Endothelial cell of umbilical vein (primary cell): ENCODE measurements at regions of chr15 and their contacts with region 1.

Region 1: DNA sequence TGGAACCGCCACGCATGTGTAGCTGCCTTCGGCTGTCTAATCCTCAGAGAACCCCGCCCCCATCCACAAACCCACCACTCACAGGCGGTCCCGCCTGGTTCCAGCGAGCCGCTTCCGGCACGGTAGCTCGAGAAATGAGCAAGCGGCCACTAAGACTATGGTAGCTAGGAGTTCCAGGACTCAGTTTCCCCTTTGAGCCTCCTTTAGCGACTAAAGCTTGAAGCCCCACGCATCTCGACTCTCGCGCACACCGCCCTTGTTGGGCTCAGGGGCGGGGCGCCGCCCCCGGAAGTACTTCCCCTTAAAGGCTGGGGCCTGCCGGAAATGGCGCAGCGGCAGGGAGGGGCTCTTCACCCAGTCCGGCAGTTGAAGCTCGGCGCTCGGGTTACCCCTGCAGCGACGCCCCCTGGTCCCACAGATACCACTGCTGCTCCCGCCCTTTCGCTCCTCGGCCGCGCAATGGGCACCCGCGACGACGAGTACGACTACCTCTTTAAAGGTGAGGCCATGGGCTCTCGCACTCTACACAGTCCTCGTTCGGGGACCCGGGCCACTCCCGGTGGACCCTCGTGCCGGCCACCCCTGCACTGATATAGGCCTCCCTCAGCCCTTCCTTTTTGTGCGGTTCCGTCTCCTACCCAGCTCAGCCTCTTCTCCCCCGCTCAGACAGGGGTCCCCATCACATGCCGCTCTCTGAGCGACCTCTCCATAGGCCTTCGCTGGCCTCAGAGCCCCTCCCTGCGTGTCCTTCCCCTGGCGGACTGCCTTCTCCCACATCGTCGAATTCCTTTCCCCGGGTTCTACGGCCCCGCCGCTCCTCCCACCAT is at the start of gene RAB11A:
- DNase-seq: peak; percentile 96
- H3K4me3 ChIP-seq: peak within 1 kb of the TSS; percentile 47 to 91 (median 81)
- H3K27ac ChIP-seq: peak within 1 kb of the TSS; percentile 61
- H3K4me1 ChIP-seq: peaks cover 22% of the 10 kb centered on the region
- H3K27me3 ChIP-seq: no peaks in the 10 kb centered on the region
- CTCF ChIP-seq: peak; percentile 19 to 41
- POLR2A ChIP-seq: peak; percentile 98
- total RNA-seq, gene RAB11A: 250 and 257 TPM in 2 replicates

Region 2: GRCh38 chr15:65516997-65517865 is 352.1 kb before region 1 on chr15 and contains the start of gene DPP8:
- CTCF ChIA-PET with region 1: no interaction called
- POLR2A ChIA-PET with region 1: no interaction called
- dilution Hi-C with region 1: no loop called
- intact Hi-C with region 1: loop called (anchors 2 kb)
- DNase-seq: peak; percentile 92
- H3K4me3 ChIP-seq: peak within 1 kb of the TSS; percentile 67 to 96 (median 92)
- H3K27ac ChIP-seq: peak within 1 kb of the TSS; percentile 70
- H3K4me1 ChIP-seq: peaks cover 19% of the 10 kb centered on the region
- H3K27me3 ChIP-seq: no peaks in the 10 kb centered on the region
- CTCF ChIP-seq: peak; percentile 98
- POLR2A ChIP-seq: peak; percentile 78
- total RNA-seq, gene DPP8: 34.2 and 35.3 TPM in 2 replicates

Region 3: GRCh38 chr15:65638681-65639089 is 230.7 kb before region 1 on chr15:
- CTCF ChIA-PET with region 1: interaction called, 4 read pairs
- POLR2A ChIA-PET with region 1: interaction called, 4 read pairs
- dilution Hi-C with region 1: no loop called
- intact Hi-C with region 1: loop called (anchors 1 kb)
- DNase-seq: peak; percentile 74
- H3K4me3 ChIP-seq: no peak overlapping the region
- H3K27ac ChIP-seq: no peak overlapping the region
- H3K4me1 ChIP-seq: peaks cover 20% of the 10 kb centered on the region
- H3K27me3 ChIP-seq: no peaks in the 10 kb centered on the region
- CTCF ChIP-seq: peak; percentile 72
- POLR2A ChIP-seq: no peak

Region 4: DNA sequence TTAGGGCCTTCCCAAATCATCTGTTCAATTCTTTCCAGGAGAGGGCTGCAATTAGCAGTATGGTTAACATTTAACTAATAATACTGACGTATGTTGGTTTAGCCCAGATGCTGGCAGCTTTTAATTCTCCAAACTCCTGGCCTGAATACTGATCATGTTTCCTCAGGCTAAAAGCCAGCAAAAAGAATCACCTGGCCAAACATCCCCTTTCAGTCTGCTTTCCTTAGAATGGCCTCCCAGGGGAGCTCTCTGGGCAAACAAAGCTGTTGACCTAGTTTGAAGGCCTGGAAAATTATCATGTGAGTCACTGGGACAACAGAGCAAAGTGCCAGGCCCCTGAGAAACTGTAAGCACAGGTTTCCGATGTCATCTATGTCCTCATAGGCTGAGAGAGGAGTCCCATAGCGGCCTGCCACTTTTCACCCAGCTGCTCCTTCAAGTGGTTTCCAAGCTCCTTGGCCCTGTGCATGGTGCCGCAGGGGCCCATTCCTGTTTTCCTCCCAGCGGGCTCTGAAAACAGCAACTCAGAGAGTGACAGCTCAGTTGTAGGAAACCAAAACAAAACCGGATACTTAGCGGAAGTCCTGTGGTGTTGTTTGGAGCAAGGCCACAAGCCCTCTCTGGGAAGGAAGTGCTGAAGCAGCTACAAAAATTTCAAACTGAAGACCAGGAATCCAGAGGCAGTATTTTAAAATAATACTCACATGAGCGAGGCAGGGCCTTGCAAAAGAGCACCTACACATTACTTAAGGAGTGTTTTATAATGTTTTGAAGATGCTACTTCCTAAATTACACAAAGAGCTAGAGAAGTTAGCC is 36.6 kb before region 1 on chr15:
- CTCF ChIA-PET with region 1: interaction called, 12 read pairs
- POLR2A ChIA-PET with region 1: interaction called, 9 read pairs
- dilution Hi-C with region 1: no loop called
- intact Hi-C with region 1: loop called (anchors 1 kb)
- DNase-seq: peak; percentile 99
- H3K4me3 ChIP-seq: peak overlapping the region in 1 of 3 experiments; percentile 20
- H3K27ac ChIP-seq: peak overlapping the region; percentile 63
- H3K4me1 ChIP-seq: peaks cover 31% of the 10 kb centered on the region
- H3K27me3 ChIP-seq: no peaks in the 10 kb centered on the region
- CTCF ChIP-seq: peak; percentile 15 to 26
- POLR2A ChIP-seq: no peak

Region 5: GRCh38 chr15:65881766-65882434 is 12.6 kb after region 1 on chr15:
- CTCF ChIA-PET with region 1: interaction called, 8 read pairs
- POLR2A ChIA-PET with region 1: interaction called, 15 read pairs
- dilution Hi-C with region 1: no loop called
- intact Hi-C with region 1: no loop called
- DNase-seq: peak; percentile 91
- H3K4me3 ChIP-seq: no peak overlapping the region
- H3K27ac ChIP-seq: peak overlapping the region; percentile 24
- H3K4me1 ChIP-seq: no peaks in the 10 kb centered on the region
- H3K27me3 ChIP-seq: no peaks in the 10 kb centered on the region
- CTCF ChIP-seq: no peak
- POLR2A ChIP-seq: no peak